AG04450 (cell line): ENCODE measurements at regions of chr1 and their contacts with region 1.

Region 1: GRCh38 chr1:44594871-44595746 is 79.2 kb downstream of the TMEM53 start:
- DNase-seq: no peak
- H3K4me3 ChIP-seq: no peak overlapping the region
- H3K27ac ChIP-seq: no peak overlapping the region
- H3K27me3 ChIP-seq: peaks cover 32% of the 10 kb centered on the region
- CTCF ChIP-seq: peak; percentile 95

Region 2: DNA sequence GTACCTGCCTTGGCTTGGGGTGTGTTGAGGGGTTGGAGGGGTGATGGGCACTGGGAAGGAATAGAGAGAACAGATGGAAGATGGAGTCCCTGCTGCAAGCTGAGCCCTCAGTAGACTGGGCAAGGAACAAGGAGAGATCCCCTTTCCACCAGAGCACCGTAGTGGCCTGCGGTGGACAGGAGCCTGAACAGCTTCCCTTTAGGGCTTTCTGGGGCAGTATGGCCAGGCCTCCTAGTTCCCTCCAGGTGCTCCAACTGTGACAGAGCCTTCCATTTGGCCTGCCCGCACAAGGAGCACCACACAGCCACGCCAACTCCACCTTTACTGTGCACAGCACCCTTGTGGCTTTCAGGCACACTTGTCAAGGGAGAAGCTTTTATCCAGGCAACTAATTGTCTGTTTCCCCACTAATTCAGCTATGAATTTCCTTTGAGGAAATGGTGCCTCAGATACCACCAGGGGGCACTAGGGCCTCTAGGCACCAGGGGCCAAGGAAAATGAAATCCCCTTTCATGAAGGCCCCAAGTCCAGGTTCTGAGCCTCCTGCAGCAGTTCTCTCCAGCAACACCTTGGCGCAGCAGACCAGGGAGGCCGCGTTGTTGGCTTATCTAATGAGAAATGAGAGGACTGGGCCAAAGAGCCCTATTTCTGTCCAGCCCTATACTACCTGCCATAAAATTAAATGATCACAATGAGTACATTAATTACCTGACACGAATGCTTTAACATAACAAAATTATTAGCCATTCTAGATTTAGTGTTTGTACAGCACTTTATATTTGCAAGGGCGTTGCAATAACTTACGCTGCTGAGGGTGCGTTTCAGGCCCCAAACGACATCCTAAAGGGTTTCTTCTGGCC is 217.0 kb before region 1 on chr1:
- CTCF ChIA-PET with region 1: interaction called, 93 read pairs
- POLR2A ChIA-PET with region 1: no interaction called
- DNase-seq: peak; percentile 16
- H3K4me3 ChIP-seq: no peak overlapping the region
- H3K27ac ChIP-seq: no peak overlapping the region
- H3K27me3 ChIP-seq: peaks cover 30% of the 10 kb centered on the region
- CTCF ChIP-seq: peak; percentile 81

Region 3: GRCh38 chr1:44609412-44609767 is 14.3 kb after region 1 on chr1:
- CTCF ChIA-PET with region 1: interaction called, 11 read pairs
- POLR2A ChIA-PET with region 1: no interaction called
- DNase-seq: no peak
- H3K4me3 ChIP-seq: no peak overlapping the region
- H3K27ac ChIP-seq: no peak overlapping the region
- H3K27me3 ChIP-seq: peaks cover 20% of the 10 kb centered on the region
- CTCF ChIP-seq: peak; percentile 74